SK-N-SH (cell line): ENCODE measurements at regions of chr9 and their contacts with region 1.

Region 1: GRCh38 chr9:124502711-124503702 is 4.2 kb downstream of the NR5A1 start:
- DNase-seq: peak; percentile 64
- H3K4me3 ChIP-seq: no peak overlapping the region
- H3K27ac ChIP-seq: no peak overlapping the region
- H3K4me1 ChIP-seq: no peaks in the 10 kb centered on the region; a peak in 1 of 4 replicates
- H3K27me3 ChIP-seq: peaks cover 51% of the 10 kb centered on the region
- CTCF ChIP-seq: no peak
- EP300 ChIP-seq: no peak
- RAD21 ChIP-seq: no peak

Region 2: DNA sequence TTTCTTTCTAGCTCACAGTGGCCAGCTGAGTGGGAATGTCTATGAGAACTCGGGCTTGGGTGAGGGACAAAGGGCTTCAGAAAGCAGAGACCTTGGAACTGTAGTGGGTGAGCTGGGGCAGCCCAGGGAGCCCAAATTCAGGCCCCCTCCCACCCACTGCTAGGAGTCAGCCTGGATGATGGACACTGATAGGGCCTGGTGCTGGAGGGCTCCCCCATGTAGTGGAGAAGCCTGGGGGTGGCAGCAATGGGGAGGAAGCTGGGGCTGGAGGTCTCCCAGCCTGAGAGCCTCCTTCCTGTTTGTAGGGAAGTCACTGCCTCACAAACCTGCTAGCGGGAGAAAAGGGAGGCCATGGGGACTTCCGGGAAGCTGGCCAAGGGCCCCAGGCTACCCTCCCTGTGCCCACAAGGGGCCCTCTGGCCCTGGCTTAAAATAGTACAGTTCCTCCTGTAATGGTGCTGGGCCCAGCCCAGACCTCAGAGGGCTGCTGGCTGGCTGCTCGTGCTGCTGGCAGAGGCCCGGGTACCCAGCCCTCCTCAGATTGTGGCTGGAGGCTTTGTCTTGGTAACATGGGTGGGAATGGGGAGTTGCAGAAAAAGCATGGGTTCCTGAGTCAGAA is 10.5 kb after region 1 on chr9:
- CTCF ChIA-PET with region 1: interaction called, 19 read pairs
- POLR2A ChIA-PET with region 1: no interaction called
- DNase-seq: peak; percentile 42
- H3K4me3 ChIP-seq: no peak overlapping the region
- H3K27ac ChIP-seq: no peak overlapping the region
- H3K4me1 ChIP-seq: peaks cover 0 to 31% of the 10 kb centered on the region in 2 experiments; a peak in 2 of 4 replicates
- H3K27me3 ChIP-seq: no peaks in the 10 kb centered on the region
- CTCF ChIP-seq: no peak
- EP300 ChIP-seq: no peak
- RAD21 ChIP-seq: no peak